ENCODE measurements at regions of chrX and their contacts with region 1.

Region 1: GRCh38 chrX:103488332-103488731 is 31.0 kb downstream of the RAB40A start:
- H3K4me3 ChIP-seq: no peak overlapping the region
- H3K27ac ChIP-seq: no peak overlapping the region
- H3K4me1 ChIP-seq: no peaks in the 10 kb centered on the region
- CTCF ChIP-seq: no peak

Region 2: DNA sequence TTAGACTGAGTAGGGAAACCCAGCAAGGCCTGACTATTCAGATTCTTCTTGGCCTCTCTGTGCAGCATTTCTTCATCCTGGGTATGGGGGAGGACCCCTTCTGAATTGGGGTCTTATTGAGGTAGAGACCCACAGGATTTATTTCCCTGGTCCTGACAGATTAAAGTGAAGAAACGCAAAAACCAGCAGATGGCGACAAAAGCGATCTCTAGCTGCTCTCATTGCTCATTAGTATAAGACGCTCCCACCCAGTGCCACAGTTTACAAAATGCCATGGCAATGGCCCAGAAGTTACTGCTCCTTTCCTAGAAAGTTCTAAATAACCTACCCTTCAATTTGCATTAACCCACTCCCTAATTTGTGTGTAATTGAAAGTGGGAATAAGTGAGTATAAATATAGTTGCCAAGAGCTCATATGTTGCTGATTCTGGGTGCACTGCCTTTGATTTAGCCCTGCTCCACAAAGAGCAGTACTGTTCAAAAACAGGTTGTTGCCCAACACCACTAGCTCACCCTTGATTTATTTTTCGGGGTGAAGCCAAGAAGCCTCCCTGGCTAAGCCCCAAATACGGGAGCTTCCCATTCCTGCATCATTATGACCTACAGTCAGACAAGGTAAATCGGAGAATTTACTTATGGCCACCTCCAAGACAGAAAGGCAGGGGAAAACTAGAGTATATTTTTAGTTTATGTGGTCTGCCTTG is 277.2 kb before region 1 on chrX:
- CTCF ChIA-PET with region 1: interaction called, 17 read pairs
- POLR2A ChIA-PET with region 1: no interaction called
- H3K4me3 ChIP-seq: no peak overlapping the region
- H3K27ac ChIP-seq: no peak overlapping the region
- H3K4me1 ChIP-seq: no peaks in the 10 kb centered on the region
- CTCF ChIP-seq: 0 out of 2 replicates have a peak, but pooled peaks have one; percentile 13

Region 3: GRCh38 chrX:103343105-103343504 is 145.2 kb before region 1 on chrX:
- CTCF ChIA-PET with region 1: interaction called, 10 read pairs
- POLR2A ChIA-PET with region 1: no interaction called
- H3K4me3 ChIP-seq: no peak overlapping the region
- H3K27ac ChIP-seq: no peak overlapping the region
- H3K4me1 ChIP-seq: no peaks in the 10 kb centered on the region
- CTCF ChIP-seq: 0 out of 2 replicates have a peak, but pooled peaks have one; percentile 30

Region 4: DNA sequence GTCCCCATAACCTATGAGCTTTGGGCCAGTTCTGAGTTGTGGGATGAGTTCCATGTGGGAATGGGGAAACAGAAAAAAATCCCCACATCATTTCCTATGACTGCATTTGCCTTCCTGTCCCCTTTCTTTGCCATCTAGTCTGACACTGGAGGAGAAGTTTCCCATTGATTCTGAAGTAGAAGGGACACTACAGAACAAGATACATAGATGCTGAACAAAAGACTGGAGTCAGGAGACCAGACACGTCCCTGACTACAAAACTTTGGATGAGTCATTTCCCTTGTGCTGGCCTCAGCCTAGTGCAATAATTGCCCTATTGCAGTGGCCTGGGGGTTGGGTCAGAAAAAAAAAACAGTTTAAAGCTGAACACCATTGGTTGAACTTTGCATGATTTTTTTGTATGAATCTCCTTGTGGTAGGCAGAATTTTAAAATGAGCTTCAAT is 89.9 kb before region 1 on chrX:
- CTCF ChIA-PET with region 1: no interaction called
- POLR2A ChIA-PET with region 1: no interaction called
- H3K4me3 ChIP-seq: no peak overlapping the region
- H3K27ac ChIP-seq: no peak overlapping the region
- H3K4me1 ChIP-seq: no peaks in the 10 kb centered on the region
- CTCF ChIP-seq: no peak